WTC11 (cell line): ENCODE measurements at regions of chr7 and their contacts with region 1.

Region 1: DNA sequence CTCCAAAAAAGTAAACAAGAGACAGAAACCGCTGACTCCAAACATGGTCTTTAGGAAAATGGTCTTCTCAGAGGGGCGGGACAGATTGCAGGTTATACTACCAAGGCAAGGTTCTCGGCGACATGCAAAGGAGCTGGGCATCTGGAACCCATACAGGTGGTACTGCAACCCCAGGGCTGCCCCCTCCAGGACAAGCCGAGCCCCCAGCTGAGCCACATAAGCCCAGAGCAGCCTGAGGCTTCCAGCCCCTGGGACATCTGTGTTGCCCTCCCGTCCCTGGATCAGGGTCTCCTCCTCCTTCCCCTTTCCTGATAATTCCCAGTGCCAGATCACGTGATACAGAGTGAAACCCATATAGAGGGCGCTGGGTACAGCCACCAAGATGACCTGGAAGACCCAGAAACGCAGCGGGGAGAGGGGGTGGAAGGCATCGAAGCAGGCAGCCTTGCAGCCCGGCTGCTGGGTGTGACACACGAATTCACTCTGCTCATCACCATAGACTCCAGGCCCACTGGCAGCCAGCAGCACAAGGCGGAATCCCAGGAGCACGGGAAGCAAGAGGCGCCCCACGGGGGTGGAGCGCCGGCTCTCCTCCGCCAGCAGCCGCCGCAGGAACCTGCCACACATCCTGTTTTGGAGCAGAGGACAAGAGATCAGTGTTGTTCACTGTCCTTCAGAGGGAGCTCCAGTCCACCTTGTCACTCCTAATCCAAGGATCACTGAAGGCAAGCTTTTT is at the start of gene GJC3:
- DNase-seq: peak; percentile 73
- ATAC-seq: peak; percentile 95
- H3K4me3 Mint-ChIP-seq: peak within 1 kb of the TSS; percentile 64
- H3K27ac Mint-ChIP-seq: no peak within 1 kb of the TSS; the same call in 1 of the 2 replicates
- H3K4me1 Mint-ChIP-seq: peaks cover 51% of the 10 kb centered on the region
- H3K27me3 Mint-ChIP-seq: peaks cover 14% of the 10 kb centered on the region
- CTCF ChIP-seq: no peak
- total RNA-seq, gene GJC3: 2.9 to 3.7 TPM (median 3.4 TPM) in 3 replicates

Region 2: GRCh38 chr7:99218406-99219184 is 710.6 kb before region 1 on chr7:
- CTCF ChIA-PET with region 1: no interaction called
- POLR2A ChIA-PET with region 1: no interaction called
- DNase-seq: no peak
- ATAC-seq: no peak
- H3K4me3 Mint-ChIP-seq: no peak overlapping the region
- H3K27ac Mint-ChIP-seq: no peak overlapping the region
- H3K4me1 Mint-ChIP-seq: no peaks in the 10 kb centered on the region
- H3K27me3 Mint-ChIP-seq: no peaks in the 10 kb centered on the region; the same call in 1 of the 2 replicates
- CTCF ChIP-seq: no peak

Region 3: GRCh38 chr7:99943641-99944496 is 14.7 kb after region 1 on chr7:
- CTCF ChIA-PET with region 1: interaction called, 17 read pairs
- POLR2A ChIA-PET with region 1: interaction called, 9 read pairs
- DNase-seq: peak; percentile 69
- ATAC-seq: peak; percentile 94
- H3K4me3 Mint-ChIP-seq: peak overlapping the region; percentile 60
- H3K27ac Mint-ChIP-seq: peak overlapping the region; percentile 100
- H3K4me1 Mint-ChIP-seq: peaks cover 44% of the 10 kb centered on the region
- H3K27me3 Mint-ChIP-seq: peaks cover 1% of the 10 kb centered on the region; the same call in 1 of the 2 replicates
- CTCF ChIP-seq: no peak